Common myeloid progenitor, CD34-positive (primary cell): ENCODE measurements at regions of chr18 and their contacts with region 1.

Region 1: DNA sequence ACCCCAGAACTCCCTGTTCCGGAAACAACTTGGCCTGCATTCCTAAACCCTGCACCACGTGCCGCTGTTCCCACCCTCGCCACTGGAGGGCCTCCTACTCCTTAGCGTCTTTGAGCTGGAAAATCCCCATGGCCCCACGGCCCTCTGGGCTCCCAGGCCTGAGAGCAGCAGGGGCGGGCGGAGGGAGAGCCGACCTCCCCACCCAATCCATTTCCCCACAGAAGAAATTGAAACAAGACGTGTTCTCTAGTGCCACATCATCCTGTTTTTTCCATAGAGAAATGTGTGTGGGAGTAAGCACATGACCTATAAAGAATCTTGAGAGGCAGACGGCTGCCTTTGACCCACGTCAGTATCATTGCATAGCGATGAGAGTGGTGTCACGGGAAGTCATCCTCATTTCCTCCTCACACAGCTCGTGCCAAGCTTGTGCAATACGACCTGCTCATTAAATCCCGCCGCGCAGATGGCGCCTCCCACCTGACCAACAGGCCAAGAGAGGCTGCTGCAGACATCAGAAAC is 79.2 kb downstream of the LAMA1 start:
- DNase-seq: peak in 2 of 3 donors; percentile 54 to 76
- H3K4me3 ChIP-seq: peak overlapping the region in 1 of 7 experiments; percentile 40
- H3K27ac ChIP-seq: no peak overlapping the region
- H3K4me1 ChIP-seq: no peaks in the 10 kb centered on the region
- H3K27me3 ChIP-seq: peaks cover 0 to 3% (median 0%) of the 10 kb centered on the region in 5 experiments

Region 2: GRCh38 chr18:7094432-7094831 is 56.0 kb after region 1 on chr18:
- CTCF ChIA-PET with region 1: no interaction called
- POLR2A ChIA-PET with region 1: no interaction called
- DNase-seq: no peak
- H3K4me3 ChIP-seq: no peak overlapping the region
- H3K27ac ChIP-seq: no peak overlapping the region
- H3K4me1 ChIP-seq: no peaks in the 10 kb centered on the region
- H3K27me3 ChIP-seq: peaks cover 0 to 3% (median 0%) of the 10 kb centered on the region in 5 experiments

Region 3: DNA sequence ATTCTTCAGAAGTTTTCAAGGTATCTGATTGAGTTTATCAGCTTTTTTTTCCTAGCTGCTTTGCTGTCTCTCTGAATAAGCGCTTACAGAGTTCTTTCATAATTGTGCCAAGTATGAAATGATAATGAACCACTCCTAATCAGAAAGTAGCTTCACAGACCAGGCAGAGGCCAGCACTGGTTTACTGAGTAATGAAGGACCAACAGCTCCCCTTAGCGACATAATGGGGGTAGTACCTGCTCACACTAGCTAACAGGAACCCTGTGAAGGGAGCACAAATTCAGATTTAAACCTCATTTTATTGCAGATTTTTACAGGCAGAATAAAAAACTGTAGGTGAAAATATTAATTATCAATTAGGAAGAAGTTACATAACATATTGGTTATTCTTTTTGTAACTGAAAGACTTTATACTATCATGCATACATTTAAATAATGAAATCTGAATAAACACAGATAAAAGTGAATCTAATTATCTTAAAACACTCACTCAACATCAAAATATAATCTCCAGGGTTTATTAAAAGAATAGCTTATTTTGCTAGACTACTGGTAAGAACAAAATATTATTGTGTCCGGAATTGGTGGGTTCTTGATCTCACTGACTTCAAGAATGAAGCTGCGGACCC is 138.8 kb after region 1 on chr18:
- CTCF ChIA-PET with region 1: interaction called, 10 read pairs
- POLR2A ChIA-PET with region 1: no interaction called
- DNase-seq: peak; percentile 33 to 72 (median 68)
- H3K4me3 ChIP-seq: no peak overlapping the region
- H3K27ac ChIP-seq: no peak overlapping the region
- H3K4me1 ChIP-seq: no peaks in the 10 kb centered on the region
- H3K27me3 ChIP-seq: no peaks in the 10 kb centered on the region